ENCODE measurements at regions of chr22 and their contacts with region 1.

Region 1: DNA sequence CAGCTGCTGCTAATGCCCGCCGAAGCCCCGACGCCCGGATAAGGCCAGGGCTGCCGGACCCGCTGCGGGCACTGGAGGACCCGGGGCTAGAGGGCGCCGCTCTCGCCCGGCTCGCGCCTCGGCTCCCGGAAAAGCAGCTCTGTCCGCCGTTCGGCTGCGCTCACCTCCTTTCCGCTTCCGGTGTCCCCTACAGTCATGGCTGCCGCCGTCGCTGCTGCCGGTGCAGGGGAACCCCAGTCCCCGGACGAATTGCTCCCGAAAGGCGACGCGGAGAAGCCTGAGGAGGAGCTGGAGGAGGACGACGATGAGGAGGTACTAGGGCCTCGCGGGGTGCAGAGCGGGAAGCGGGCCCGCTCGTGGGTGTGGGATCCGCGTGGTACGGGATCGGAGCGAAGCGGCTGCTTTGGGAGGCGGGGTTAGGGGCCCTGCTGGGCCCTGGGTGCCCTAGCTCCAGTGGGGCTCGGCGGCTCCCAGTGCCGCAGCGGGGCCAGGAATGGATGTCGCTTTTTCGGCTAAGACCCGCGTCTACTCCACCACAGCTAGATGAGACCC is at the start of gene TOMM22:
- DNase-seq: peak; percentile 80 to 86 (median 82)
- H3K4me3 ChIP-seq: peak within 1 kb of the TSS; percentile 79 to 83
- H3K4me3 Mint-ChIP-seq: peak within 1 kb of the TSS; percentile 97 to 100 (median 99)
- H3K27ac ChIP-seq: peak within 1 kb of the TSS; percentile 92
- H3K27ac Mint-ChIP-seq: peak within 1 kb of the TSS; percentile 92 to 99 (median 99)
- H3K4me1 ChIP-seq: peaks cover 15% of the 10 kb centered on the region
- H3K4me1 Mint-ChIP-seq: peaks cover 8 to 29% (median 17%) of the 10 kb centered on the region in 4 donors
- H3K27me3 ChIP-seq: no peaks in the 10 kb centered on the region
- H3K27me3 Mint-ChIP-seq: peaks cover 0 to 1% of the 10 kb centered on the region in 2 donors
- total RNA-seq, gene TOMM22: 41.2 to 42.3 TPM

Region 2: DNA sequence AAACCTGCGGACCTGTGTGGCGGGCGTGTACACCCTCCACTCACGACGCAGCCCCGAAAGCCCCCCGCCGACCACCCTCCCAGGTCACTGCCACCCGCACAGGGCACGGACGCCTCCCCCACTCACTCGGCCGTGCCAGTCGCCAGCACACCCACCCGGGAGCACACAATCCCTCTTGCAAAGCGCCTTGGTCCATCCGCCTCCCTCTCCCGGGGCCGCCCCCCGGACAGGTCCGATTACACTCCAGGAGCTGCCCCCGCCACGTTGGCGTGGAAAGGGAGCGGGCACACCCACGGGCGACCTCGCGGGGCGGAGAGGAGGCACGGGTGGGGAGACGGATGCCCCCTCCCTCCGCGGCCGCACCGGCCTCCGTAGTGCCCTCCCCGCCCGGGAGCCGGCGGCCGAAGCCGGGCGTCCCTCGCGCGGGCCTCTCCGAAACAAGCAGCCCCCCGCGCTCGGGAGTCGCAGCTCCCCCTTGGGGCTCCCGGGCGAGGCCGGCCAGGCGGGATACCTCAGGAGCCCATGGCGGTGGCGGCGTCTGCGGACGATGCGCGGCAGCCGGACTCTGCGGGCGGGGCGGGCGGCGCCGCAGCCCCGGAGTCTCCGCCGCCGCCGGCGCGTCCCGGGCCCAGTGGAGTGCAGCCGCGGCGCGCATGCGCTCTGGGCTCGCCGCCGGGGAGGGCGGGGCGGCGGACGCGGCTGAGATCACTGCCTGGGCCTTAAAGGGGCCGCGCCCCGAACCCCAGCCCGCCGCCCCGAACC is 409.3 kb before region 1 on chr22 and contains the start of gene TMEM184B:
- CTCF ChIA-PET with region 1: no interaction called
- POLR2A ChIA-PET with region 1: no interaction called
- intact Hi-C with region 1: loop called (anchors 2 kb)
- DNase-seq: peak; percentile 74 to 90 (median 85)
- H3K4me3 ChIP-seq: peak within 1 kb of the TSS; percentile 74 to 91
- H3K4me3 Mint-ChIP-seq: peak within 1 kb of the TSS; percentile 90 to 95 (median 94)
- H3K27ac ChIP-seq: peak within 1 kb of the TSS; percentile 90
- H3K27ac Mint-ChIP-seq: peak within 1 kb of the TSS; percentile 95 to 98 (median 97)
- H3K4me1 ChIP-seq: peaks cover 46% of the 10 kb centered on the region
- H3K4me1 Mint-ChIP-seq: peaks cover 40 to 62% (median 52%) of the 10 kb centered on the region in 4 donors
- H3K27me3 ChIP-seq: no peaks in the 10 kb centered on the region
- H3K27me3 Mint-ChIP-seq: peaks cover 0 to 1% of the 10 kb centered on the region in 2 donors
- total RNA-seq, gene TMEM184B: 35.7 to 36.6 TPM

Region 3: DNA sequence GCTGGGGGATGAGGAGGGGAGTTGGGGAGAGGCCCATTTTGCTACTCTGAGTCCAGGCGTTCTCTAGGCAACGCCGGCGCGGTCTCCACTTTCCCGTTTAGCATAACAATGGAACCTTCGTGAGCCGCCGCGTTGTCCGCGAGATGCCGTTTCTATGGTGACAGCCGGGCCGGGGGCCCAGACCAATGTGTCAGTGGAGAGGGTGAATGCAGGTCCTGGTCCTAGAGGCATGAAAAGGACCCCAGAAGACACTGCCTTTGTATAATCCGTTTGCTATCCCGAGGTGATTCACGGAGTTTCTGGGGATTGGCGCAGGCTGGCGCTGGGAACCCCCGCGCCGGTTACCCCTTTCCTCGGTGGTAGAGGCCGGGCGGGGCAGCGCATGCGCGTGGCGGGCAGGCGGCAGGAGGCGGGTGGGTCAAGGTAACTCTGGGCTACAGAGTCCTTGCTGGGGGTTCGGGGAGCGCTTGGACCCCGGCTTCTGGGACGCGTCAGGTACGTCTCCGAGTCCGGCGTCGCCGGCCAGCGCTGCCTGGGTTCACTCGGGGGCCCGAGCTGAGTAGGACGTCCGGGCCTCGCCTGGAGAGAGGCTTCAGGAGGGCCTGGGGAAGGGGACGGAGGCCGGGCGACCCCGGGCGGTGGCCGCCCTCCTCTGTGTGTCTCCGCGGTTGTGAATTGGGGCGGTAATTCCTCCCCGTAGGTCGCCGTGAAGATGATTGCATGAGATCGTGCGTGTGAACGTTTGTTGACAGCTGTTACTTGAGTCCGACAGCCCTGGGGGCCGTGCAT is 25.4 kb before region 1 on chr22 and contains the starts of genes CBY1 and FAM227A:
- CTCF ChIA-PET with region 1: interaction called, 7 read pairs
- POLR2A ChIA-PET with region 1: interaction called, 26 read pairs
- intact Hi-C with region 1: loop called (anchors 1 kb)
- DNase-seq: peak; percentile 85 to 92 (median 86)
- H3K4me3 ChIP-seq: peak within 1 kb of the TSS; percentile 90 to 98
- H3K4me3 Mint-ChIP-seq: peak within 1 kb of the TSS; percentile 93 to 99 (median 96)
- H3K27ac ChIP-seq: peak within 1 kb of the TSS; percentile 88
- H3K27ac Mint-ChIP-seq: peak within 1 kb of the TSS; percentile 98 to 100 (median 99)
- H3K4me1 ChIP-seq: peaks cover 16% of the 10 kb centered on the region
- H3K4me1 Mint-ChIP-seq: peaks cover 10 to 24% (median 19%) of the 10 kb centered on the region in 4 donors
- H3K27me3 ChIP-seq: no peaks in the 10 kb centered on the region
- H3K27me3 Mint-ChIP-seq: no peaks in the 10 kb centered on the region
- total RNA-seq, gene CBY1: 30.4 to 35.2 TPM
- total RNA-seq, gene FAM227A: 0.44 TPM in 1 of 2 experiments, not detected in the other

Region 4: GRCh38 chr22:38700270-38700788 is 18.5 kb after region 1 on chr22:
- CTCF ChIA-PET with region 1: interaction called, 49 read pairs
- POLR2A ChIA-PET with region 1: interaction called, 84 read pairs
- intact Hi-C with region 1: loop called (anchors 1 kb)
- DNase-seq: peak in 2 of 5 donors; percentile 42 to 63
- H3K4me3 ChIP-seq: peak overlapping the region in 1 of 2 donors; percentile 79
- H3K4me3 Mint-ChIP-seq: peak overlapping the region; percentile 90 to 98 (median 92)
- H3K27ac ChIP-seq: peak overlapping the region; percentile 98
- H3K27ac Mint-ChIP-seq: peak overlapping the region; percentile 98 to 100 (median 100)
- H3K4me1 ChIP-seq: peaks cover 61% of the 10 kb centered on the region
- H3K4me1 Mint-ChIP-seq: peaks cover 53 to 69% (median 57%) of the 10 kb centered on the region in 4 donors
- H3K27me3 ChIP-seq: no peaks in the 10 kb centered on the region
- H3K27me3 Mint-ChIP-seq: peaks cover 0 to 4% of the 10 kb centered on the region in 2 donors

Region 5: GRCh38 chr22:38793721-38794466 is 112.0 kb after region 1 on chr22 and contains the start of gene DNAL4:
- CTCF ChIA-PET with region 1: no interaction called
- POLR2A ChIA-PET with region 1: no interaction called
- intact Hi-C with region 1: loop called (anchors 1 kb)
- DNase-seq: peak; percentile 93 to 96 (median 95)
- H3K4me3 ChIP-seq: peak within 1 kb of the TSS; percentile 52 to 62
- H3K4me3 Mint-ChIP-seq: peak within 1 kb of the TSS; percentile 88 to 93 (median 91)
- H3K27ac ChIP-seq: peak within 1 kb of the TSS; percentile 78
- H3K27ac Mint-ChIP-seq: peak within 1 kb of the TSS; percentile 88 to 97 (median 94)
- H3K4me1 ChIP-seq: peaks cover 16% of the 10 kb centered on the region
- H3K4me1 Mint-ChIP-seq: peaks cover 15 to 22% (median 18%) of the 10 kb centered on the region in 4 donors
- H3K27me3 ChIP-seq: no peaks in the 10 kb centered on the region
- H3K27me3 Mint-ChIP-seq: peaks cover 4 to 23% of the 10 kb centered on the region in 2 donors
- total RNA-seq, gene DNAL4: 8.6 to 9.6 TPM

Measured in CD4-positive, alpha-beta memory T cell (primary cell).